Right ventricle myocardium superior (tissue), 1 donor: ENCODE measurements at regions of chr22 and their contacts with region 1.

Region 1: DNA sequence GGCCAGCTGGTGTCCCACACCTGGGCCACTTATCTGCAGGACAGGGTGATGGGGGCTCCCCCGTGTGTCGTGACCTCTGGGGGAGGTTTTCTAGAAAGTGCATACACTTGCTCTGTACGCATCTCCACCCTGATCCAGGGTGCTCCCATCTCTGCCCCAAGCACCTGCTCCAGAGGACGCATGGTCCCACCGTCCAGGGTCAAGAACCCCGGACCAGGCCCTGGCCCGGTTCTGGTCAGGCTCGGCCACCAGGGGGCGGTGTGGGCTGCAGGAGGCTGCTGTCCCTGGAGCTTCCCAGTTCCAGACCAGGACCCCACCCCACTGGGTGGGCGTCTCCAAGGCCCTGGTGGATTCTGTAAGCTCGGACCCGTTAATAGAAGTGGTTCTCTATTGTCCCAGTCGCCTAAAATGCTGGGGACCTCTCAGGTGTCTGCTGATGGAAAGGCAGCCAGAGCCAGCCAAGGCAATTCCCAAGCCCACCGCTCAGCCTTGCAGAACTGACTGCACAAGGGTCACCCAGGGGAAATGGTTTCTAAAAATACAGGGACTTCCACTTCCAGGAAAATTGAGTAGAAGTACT is 34.7 kb upstream of the SEPTIN5 start:
- DNase-seq: peak; percentile 76
- ATAC-seq: peak; percentile 86

Region 2: DNA sequence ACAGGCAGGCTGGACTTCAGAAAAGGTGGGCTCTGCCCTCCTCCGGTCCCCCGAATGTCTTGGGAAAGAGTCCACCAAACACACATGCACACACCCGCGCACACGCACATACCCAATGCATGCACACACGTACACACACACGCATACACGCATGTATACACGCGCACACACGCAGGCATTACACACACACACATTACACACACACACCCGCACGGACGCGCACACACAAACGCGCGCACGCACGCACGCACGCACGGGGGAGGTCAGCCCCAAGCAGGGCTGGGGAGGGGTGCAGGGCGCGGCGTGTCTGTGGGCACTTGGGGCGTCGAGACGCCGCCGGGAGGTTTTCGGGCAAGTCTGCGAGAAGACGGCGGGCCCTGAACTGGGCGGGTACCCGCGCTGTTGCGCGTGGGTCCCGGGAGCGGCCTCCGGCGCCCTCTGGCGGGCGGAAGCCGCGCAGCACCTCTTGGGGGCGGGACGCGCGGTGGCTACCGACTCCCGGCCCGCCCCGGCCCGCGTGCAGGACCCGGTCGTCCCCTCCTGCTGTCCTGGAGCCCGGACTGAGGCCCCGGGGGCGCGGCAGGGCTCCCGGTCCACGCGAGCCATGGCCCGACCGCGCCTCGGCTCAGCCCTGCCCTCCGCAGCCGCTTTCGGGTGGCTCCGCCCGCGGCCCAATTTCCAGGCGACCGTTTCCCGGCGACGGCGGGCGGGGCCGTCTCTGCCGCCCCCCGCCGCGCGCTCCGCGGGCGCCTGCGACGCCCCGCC is 38.3 kb after region 1 on chr22:
- intact Hi-C with region 1: loop called (anchors 2 kb)
- DNase-seq: peak; percentile 90
- ATAC-seq: peak; percentile 81

Region 3: DNA sequence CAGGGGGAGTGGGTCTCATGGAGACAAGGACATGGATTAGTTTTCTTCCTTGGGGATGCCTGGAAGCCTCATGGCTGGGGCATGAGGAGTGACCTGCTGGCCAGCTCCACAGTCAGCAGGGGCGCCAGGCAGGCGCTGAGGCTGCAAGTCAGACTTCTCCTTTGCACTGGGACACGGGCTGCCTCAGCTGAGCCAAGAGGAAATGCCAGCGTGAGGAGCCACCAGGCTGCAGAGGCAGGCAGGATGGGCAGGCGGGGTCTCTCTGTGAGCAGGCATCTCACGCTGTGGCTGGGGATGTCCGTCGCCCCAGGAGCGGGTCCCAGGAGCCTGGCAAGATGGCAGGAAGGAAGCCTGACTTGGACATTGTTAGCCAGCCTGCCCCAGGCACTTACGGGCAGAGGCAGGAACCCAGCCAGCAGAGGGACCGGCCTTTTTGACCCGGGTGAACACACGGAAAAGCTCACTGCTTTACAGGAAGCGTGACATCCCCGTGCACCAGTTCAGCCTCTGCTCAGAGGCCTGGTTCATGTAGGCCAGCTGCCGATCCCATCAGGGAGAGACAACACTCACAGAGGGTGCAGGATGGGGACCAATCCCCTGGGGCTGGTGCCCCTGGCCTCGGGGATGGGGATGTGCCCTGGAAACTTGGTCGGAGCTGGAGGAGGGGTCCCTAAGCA is 164.9 kb after region 1 on chr22:
- intact Hi-C with region 1: no loop called
- DNase-seq: peak; percentile 80
- ATAC-seq: peak; percentile 76